CD14-positive monocyte (primary cell): ENCODE measurements at regions of chr11 and their contacts with region 1.

Region 1: DNA sequence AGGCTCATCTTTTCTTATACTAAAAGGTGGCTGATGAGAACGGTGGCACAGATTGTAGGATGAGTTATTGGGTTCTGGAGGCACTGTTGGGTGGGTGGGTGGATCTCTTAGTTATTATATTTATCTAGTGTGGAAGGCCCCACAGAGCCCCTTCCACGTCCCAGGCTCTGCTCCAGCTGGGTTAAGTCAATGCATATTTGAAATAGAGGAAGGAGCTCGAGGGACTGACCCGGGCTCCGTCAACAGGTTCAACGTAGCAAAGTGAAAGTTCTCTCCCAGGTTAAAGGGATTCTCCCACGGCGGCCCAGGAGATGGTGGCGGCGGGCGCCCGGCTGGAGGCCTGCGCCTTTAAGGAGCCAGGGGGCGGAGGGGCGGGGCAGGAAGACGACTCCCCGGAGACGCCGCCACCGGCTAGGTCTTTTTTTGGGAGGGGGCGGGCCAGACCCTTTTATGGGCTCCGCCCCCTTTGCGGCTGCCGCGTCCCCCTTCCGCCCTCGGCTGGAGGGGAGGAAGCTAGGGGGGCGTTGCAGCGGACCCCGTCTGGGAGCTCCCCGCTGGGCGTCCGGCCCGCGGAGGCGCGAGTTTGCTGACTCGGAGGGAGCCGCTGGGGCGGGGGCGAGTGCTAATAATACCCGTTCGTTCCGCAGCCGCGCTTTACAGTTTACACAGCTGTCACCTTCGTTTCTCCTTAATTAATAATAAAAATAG is 1.5 kb upstream of the INPPL1 start:
- DNase-seq: peak; percentile 82 to 85 (median 84)
- H3K4me3 ChIP-seq: peak overlapping the region; percentile 89 to 99 (median 90)
- H3K4me3 Mint-ChIP-seq: peak overlapping the region; percentile 82
- H3K27ac ChIP-seq: peak overlapping the region; percentile 84 to 86
- H3K27ac Mint-ChIP-seq: peak overlapping the region; percentile 74 to 94 (median 91)
- H3K4me1 ChIP-seq: peaks cover 52 to 62% of the 10 kb centered on the region in 2 donors
- H3K4me1 Mint-ChIP-seq: peaks cover 56% of the 10 kb centered on the region
- H3K27me3 ChIP-seq: no peaks in the 10 kb centered on the region
- H3K27me3 Mint-ChIP-seq: peaks cover 0 to 2% (median 0%) of the 10 kb centered on the region in 3 donors
- CTCF ChIP-seq: peak; percentile 17

Region 2: GRCh38 chr11:71948314-71949027 is 274.6 kb before region 1 on chr11:
- intact Hi-C with region 1: no loop called
- DNase-seq: no peak
- H3K4me3 ChIP-seq: no peak overlapping the region
- H3K4me3 Mint-ChIP-seq: no peak overlapping the region
- H3K27ac ChIP-seq: no peak overlapping the region
- H3K27ac Mint-ChIP-seq: peak overlapping the region in 2 of 7 donors; percentile 67 to 82
- H3K4me1 ChIP-seq: no peaks in the 10 kb centered on the region
- H3K4me1 Mint-ChIP-seq: peaks cover 16% of the 10 kb centered on the region
- H3K27me3 ChIP-seq: no peaks in the 10 kb centered on the region
- H3K27me3 Mint-ChIP-seq: peaks cover 0 to 2% (median 0%) of the 10 kb centered on the region in 3 donors
- CTCF ChIP-seq: no peak

Region 3: DNA sequence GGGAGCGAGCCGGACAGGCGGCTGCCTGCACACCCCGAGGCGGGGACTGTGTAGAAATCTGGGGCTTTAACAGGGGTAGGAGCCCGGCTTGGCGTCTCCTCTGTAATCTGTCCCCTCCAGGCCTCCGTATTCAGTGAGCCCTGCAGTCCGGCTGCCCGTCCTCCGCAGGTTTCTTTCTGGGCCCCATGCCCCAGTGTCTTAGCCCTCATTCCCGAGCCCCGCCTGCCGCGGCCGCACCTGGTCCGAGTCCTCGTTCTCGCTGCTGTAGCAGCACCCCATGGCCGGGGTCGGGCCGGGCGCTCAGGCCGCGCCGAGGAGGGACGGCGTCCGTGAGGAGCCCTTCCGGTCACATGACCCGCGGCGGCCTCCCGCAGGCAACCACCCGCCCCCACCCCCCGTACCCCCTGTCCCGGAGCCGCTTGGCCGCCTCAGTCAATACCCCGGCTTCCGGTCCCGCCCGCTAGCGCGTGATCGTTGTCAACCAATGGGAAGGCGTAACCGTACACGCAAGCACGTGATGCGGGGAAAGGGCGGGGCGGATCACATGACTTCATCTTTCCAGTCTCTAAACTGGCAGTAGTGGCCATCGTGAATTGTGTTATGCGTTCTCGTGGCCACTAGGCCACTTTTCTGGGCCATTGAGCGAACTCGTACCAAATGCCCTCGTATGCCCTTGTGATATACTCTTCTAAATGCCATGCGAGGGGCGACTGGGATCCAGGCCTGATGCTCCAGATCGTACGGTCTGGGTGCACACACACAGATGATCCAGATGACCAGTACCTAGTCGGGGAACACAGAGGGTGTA is 119.9 kb before region 1 on chr11 and contains the start of gene LAMTOR1:
- intact Hi-C with region 1: loop called in 1 of 2 experiments (anchors 10 kb)
- DNase-seq: peak; percentile 99
- H3K4me3 ChIP-seq: peak within 1 kb of the TSS; percentile 81 to 95 (median 81)
- H3K4me3 Mint-ChIP-seq: peak within 1 kb of the TSS; percentile 91 to 99
- H3K27ac ChIP-seq: peak within 1 kb of the TSS; percentile 90 to 95
- H3K27ac Mint-ChIP-seq: peak within 1 kb of the TSS; percentile 95 to 98 (median 96)
- H3K4me1 ChIP-seq: peaks cover 46 to 50% of the 10 kb centered on the region in 2 donors
- H3K4me1 Mint-ChIP-seq: peaks cover 49% of the 10 kb centered on the region
- H3K27me3 ChIP-seq: no peaks in the 10 kb centered on the region
- H3K27me3 Mint-ChIP-seq: peaks cover 0 to 1% (median 0%) of the 10 kb centered on the region in 3 donors
- CTCF ChIP-seq: peak; percentile 70
- polyA plus RNA-seq, gene LAMTOR1: 224 to 292 (median 256) TPM

Region 4: GRCh38 chr11:72179804-72180396 is 43.2 kb before region 1 on chr11:
- intact Hi-C with region 1: loop called in 1 of 2 experiments (anchors 5 kb)
- DNase-seq: no peak
- H3K4me3 ChIP-seq: no peak overlapping the region
- H3K4me3 Mint-ChIP-seq: no peak overlapping the region
- H3K27ac ChIP-seq: no peak overlapping the region
- H3K27ac Mint-ChIP-seq: no peak overlapping the region
- H3K4me1 ChIP-seq: peaks cover 6 to 18% of the 10 kb centered on the region in 2 donors
- H3K4me1 Mint-ChIP-seq: peaks cover 13% of the 10 kb centered on the region
- H3K27me3 ChIP-seq: peaks cover 0 to 2% of the 10 kb centered on the region in 2 donors
- H3K27me3 Mint-ChIP-seq: peaks cover 2 to 9% (median 5%) of the 10 kb centered on the region in 3 donors
- CTCF ChIP-seq: no peak

Region 5: DNA sequence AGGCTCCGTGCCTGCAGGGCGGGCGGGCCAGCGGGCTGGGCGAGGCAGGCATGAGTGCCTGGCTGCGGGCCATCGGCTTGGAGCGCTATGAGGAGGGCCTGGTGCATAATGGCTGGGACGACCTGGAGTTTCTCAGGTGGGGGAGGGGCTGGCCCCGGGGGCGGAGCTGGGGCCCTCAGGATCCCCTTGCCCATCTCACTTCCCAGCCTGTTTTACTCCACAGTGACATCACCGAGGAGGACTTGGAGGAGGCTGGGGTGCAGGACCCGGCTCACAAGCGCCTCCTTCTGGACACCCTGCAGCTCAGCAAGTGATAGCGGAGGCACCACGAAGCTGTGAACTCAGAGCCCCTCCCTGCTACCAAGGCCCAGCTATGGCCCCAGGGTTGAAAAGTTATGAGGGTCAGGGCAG is 15.0 kb after region 1 on chr11:
- intact Hi-C with region 1: no loop called
- DNase-seq: peak; percentile 35 to 64 (median 59)
- H3K4me3 ChIP-seq: no peak overlapping the region
- H3K4me3 Mint-ChIP-seq: peak overlapping the region in 1 of 2 donors; percentile 62
- H3K27ac ChIP-seq: no peak overlapping the region
- H3K27ac Mint-ChIP-seq: no peak overlapping the region
- H3K4me1 ChIP-seq: peaks cover 26 to 33% of the 10 kb centered on the region in 2 donors
- H3K4me1 Mint-ChIP-seq: peaks cover 46% of the 10 kb centered on the region
- H3K27me3 ChIP-seq: peaks cover 26 to 44% of the 10 kb centered on the region in 2 donors
- H3K27me3 Mint-ChIP-seq: peaks cover 45 to 52% (median 47%) of the 10 kb centered on the region in 3 donors
- CTCF ChIP-seq: peak; percentile 83

Region 6: DNA sequence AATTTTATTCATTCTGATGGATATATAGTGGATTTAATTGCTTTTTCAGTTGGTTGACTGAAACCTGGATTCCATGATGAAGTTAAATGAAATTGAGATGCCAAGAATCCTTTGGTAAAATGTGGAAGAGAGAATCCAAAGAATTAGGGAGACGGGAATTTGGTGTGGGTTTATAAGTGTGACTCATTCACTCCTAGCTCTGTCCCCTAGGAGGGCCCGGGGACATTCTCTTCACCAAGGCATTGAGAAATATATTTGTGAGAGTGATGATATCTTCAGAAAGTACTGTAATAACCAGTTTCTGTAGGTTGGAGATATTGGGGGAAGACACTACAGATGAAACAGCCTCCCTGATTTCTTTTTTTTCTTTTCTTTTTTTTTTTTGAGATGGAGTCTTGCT is 34.5 kb after region 1 on chr11:
- intact Hi-C with region 1: no loop called
- DNase-seq: no peak
- H3K4me3 ChIP-seq: no peak overlapping the region
- H3K4me3 Mint-ChIP-seq: no peak overlapping the region
- H3K27ac ChIP-seq: no peak overlapping the region
- H3K27ac Mint-ChIP-seq: no peak overlapping the region
- H3K4me1 ChIP-seq: peaks cover 2 to 3% of the 10 kb centered on the region in 2 donors
- H3K4me1 Mint-ChIP-seq: peaks cover 4% of the 10 kb centered on the region
- H3K27me3 ChIP-seq: peaks cover 6 to 13% of the 10 kb centered on the region in 2 donors
- H3K27me3 Mint-ChIP-seq: peaks cover 17 to 30% (median 26%) of the 10 kb centered on the region in 3 donors
- CTCF ChIP-seq: no peak

Region 7: GRCh38 chr11:72274435-72274834 is 51.4 kb after region 1 on chr11:
- intact Hi-C with region 1: loop called in 1 of 2 experiments (anchors 5 kb)
- DNase-seq: peak in 2 of 3 donors; percentile 27 to 32
- H3K4me3 ChIP-seq: no peak overlapping the region
- H3K4me3 Mint-ChIP-seq: no peak overlapping the region
- H3K27ac ChIP-seq: no peak overlapping the region
- H3K27ac Mint-ChIP-seq: peak overlapping the region in 6 of 7 donors; percentile 69 to 94 (median 86)
- H3K4me1 ChIP-seq: peaks cover 25 to 41% of the 10 kb centered on the region in 2 donors
- H3K4me1 Mint-ChIP-seq: peaks cover 39% of the 10 kb centered on the region
- H3K27me3 ChIP-seq: peaks cover 0 to 3% of the 10 kb centered on the region in 2 donors
- H3K27me3 Mint-ChIP-seq: peaks cover 5 to 7% (median 6%) of the 10 kb centered on the region in 3 donors
- CTCF ChIP-seq: no peak